Heart left ventricle (tissue), 16 donors: ENCODE measurements at regions of chr5 and their contacts with region 1.

Region 1: GRCh38 chr5:113294311-113295110 is 140.3 kb downstream of the TSSK1B start:
- DNase-seq: peak; percentile 94 to 95 (median 94)
- ATAC-seq: peak; percentile 96 to 98 (median 98)
- H3K4me3 ChIP-seq: peak overlapping the region; percentile 27 to 98 (median 76)
- H3K27ac ChIP-seq: peak overlapping the region; percentile 80 to 97 (median 90)
- H3K4me1 ChIP-seq: peaks cover 0 to 40% (median 25%) of the 10 kb centered on the region in 12 donors
- H3K27me3 ChIP-seq: peaks cover 0 to 19% (median 0%) of the 10 kb centered on the region in 9 donors
- CTCF ChIP-seq: peak in 5 of 12 donors; percentile 16 to 50 (median 38)
- POLR2A ChIP-seq: peak in 1 of 2 donors; percentile 94

Region 2: DNA sequence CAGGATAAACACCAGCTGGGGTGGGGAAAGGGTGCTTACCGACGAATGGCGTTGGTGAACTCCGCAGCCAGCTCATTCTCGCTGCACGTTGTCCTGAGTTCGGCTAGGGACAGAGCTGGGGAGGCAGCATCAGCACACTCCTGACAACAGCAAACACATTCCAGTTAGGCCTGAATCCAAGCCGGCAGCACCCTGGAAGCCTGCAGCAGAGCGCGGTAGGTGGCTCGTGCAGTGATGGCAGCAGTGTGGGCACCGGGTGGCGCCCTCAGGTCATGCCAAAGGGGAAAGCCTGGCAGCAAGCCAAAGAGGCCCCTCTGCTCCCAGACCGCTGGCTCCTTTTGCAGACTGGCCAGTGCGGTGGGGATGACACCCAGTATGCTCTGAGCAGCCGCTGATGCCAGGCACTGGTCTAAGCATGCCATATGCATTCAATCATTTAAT is 251.0 kb before region 1 on chr5:
- intact Hi-C with region 1: loop called in 1 of 10 experiments (anchors 10 kb)
- DNase-seq: peak; percentile 70 to 86 (median 81)
- ATAC-seq: peak; percentile 95 to 97 (median 96)
- H3K4me3 ChIP-seq: no peak overlapping the region
- H3K27ac ChIP-seq: peak overlapping the region in 8 of 12 donors; percentile 26 to 61 (median 42)
- H3K4me1 ChIP-seq: peaks cover 0 to 29% (median 14%) of the 10 kb centered on the region in 12 donors
- H3K27me3 ChIP-seq: no peaks in the 10 kb centered on the region
- CTCF ChIP-seq: peak; percentile 21 to 59 (median 36)
- POLR2A ChIP-seq: no peak

Region 3: GRCh38 chr5:113081881-113082546 is 212.5 kb before region 1 on chr5:
- intact Hi-C with region 1: loop called in 1 of 10 experiments (anchors 10 kb)
- DNase-seq: no peak
- ATAC-seq: peak in 2 of 4 donors; percentile 37 to 50
- H3K4me3 ChIP-seq: no peak overlapping the region
- H3K27ac ChIP-seq: no peak overlapping the region
- H3K4me1 ChIP-seq: peaks cover 0 to 43% (median 20%) of the 10 kb centered on the region in 12 donors
- H3K27me3 ChIP-seq: no peaks in the 10 kb centered on the region
- CTCF ChIP-seq: no peak
- POLR2A ChIP-seq: no peak

Region 4: GRCh38 chr5:113123618-113124017 is 170.9 kb before region 1 on chr5:
- intact Hi-C with region 1: loop called in 4 of 10 experiments (anchors 5 to 10 kb)
- DNase-seq: no peak
- ATAC-seq: peak in 2 of 4 donors; percentile 4 to 11
- H3K4me3 ChIP-seq: no peak overlapping the region
- H3K27ac ChIP-seq: no peak overlapping the region
- H3K4me1 ChIP-seq: peaks cover 4 to 70% (median 44%) of the 10 kb centered on the region in 12 donors
- H3K27me3 ChIP-seq: no peaks in the 10 kb centered on the region
- CTCF ChIP-seq: peak in 7 of 12 donors; percentile 10 to 37 (median 26)
- POLR2A ChIP-seq: no peak

Region 5: GRCh38 chr5:113204525-113205161 is 89.9 kb before region 1 on chr5:
- intact Hi-C with region 1: loop called in 6 of 10 experiments (anchors 2 to 10 kb)
- DNase-seq: peak in 3 of 5 donors; percentile 23 to 77 (median 68)
- ATAC-seq: peak in 3 of 4 donors; percentile 18 to 67 (median 59)
- H3K4me3 ChIP-seq: no peak overlapping the region
- H3K27ac ChIP-seq: peak overlapping the region in 2 of 12 donors; percentile 12 to 21
- H3K4me1 ChIP-seq: peaks cover 0 to 76% (median 44%) of the 10 kb centered on the region in 12 donors
- H3K27me3 ChIP-seq: no peaks in the 10 kb centered on the region
- CTCF ChIP-seq: no peak
- POLR2A ChIP-seq: no peak

Region 6: DNA sequence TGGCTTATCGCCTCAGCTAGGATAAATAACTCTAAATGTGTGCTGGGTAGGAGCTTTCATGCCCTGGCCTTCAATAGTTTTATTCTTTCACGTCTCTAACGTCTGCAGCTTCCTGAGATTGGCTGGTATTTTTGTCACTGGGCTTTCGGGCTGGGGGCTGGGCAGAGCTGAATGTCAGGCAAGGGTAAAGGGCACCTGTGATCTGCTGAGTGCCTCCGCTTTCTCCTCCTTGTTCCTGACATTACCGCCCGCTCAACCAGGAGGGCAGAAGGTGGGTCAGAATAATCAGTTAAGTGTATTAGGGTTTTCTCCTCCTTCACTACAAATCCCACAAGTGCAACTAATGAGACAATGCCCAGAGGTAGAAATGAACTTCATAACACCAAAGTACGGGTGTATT is 76.3 kb before region 1 on chr5:
- intact Hi-C with region 1: loop called in 6 of 10 experiments (anchors 1 to 10 kb)
- DNase-seq: peak in 4 of 5 donors; percentile 59 to 81 (median 70)
- ATAC-seq: peak; percentile 85 to 91 (median 88)
- H3K4me3 ChIP-seq: peak overlapping the region in 11 of 12 donors; percentile 2 to 35 (median 25)
- H3K27ac ChIP-seq: peak overlapping the region; percentile 68 to 86 (median 80)
- H3K4me1 ChIP-seq: peaks cover 5 to 78% (median 46%) of the 10 kb centered on the region in 12 donors
- H3K27me3 ChIP-seq: no peaks in the 10 kb centered on the region
- CTCF ChIP-seq: no peak
- POLR2A ChIP-seq: no peak

Region 7: DNA sequence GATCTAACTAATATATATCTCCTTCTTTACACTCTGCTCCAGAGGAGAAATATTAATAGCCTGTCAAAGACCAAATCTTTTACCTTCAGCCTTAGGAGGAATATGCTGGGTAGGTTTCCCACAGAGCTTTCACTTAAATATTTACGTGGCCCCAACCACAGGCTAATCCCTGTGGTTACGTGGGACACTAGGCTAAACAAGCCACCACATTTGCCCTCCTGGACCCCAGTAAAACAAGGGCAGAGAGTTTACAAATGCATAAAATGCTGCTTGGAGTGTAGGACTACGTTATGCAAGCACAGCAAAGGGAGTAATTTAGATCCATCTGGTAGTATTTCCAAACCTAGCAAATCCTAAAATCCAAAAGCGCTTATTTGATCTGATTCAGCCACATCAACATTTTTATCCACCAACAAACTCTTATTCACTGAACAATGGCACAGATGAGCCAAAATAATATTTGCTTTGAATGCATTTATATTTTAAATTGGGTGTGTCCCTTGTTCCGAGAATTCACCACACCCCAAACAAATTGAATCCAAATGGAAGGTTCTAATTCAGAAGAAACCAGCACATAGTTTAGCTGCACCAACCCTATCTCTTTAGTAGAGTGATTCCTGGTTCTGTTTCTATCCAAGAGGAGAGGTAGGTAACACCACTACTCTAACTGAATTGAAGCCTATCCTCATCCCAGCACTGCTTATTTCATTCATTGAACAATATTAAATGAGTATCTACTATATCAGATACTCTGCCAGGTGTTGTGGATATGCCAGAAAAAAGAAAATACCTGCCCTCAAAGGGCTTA is 38.7 kb before region 1 on chr5:
- intact Hi-C with region 1: loop called in 3 of 10 experiments (anchors 5 kb)
- DNase-seq: no peak
- ATAC-seq: peak in 1 of 4 donors; percentile 38
- H3K4me3 ChIP-seq: no peak overlapping the region
- H3K27ac ChIP-seq: peak overlapping the region in 7 of 12 donors; percentile 1 to 62 (median 28)
- H3K4me1 ChIP-seq: peaks cover 6 to 56% (median 28%) of the 10 kb centered on the region in 12 donors
- H3K27me3 ChIP-seq: no peaks in the 10 kb centered on the region
- CTCF ChIP-seq: no peak
- POLR2A ChIP-seq: no peak

Region 8: DNA sequence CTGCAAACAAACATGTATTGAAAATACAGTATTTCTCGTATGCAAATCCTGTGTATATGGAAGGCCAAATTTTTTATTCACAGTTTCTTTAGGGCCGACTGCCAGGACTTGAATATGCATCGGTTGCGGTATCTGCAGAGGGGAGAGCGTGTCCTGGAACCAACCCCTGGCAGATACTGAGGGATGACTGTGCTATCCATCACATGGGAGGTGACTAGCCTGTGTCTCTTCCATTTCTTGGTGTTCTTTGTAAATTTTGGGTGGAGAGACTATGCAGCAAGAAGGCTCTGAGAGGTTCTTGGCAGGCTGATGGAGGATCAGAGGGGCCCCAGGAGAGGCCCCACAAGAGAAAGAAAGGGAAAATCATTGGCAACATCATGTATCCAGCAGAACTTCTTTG is 603.2 kb after region 1 on chr5:
- intact Hi-C with region 1: no loop called
- DNase-seq: no peak
- ATAC-seq: no peak
- H3K4me3 ChIP-seq: no peak overlapping the region
- H3K27ac ChIP-seq: no peak overlapping the region
- H3K4me1 ChIP-seq: no peaks in the 10 kb centered on the region
- H3K27me3 ChIP-seq: peaks cover 0 to 22% (median 0%) of the 10 kb centered on the region in 9 donors
- CTCF ChIP-seq: no peak
- POLR2A ChIP-seq: no peak